PC-3 (cell line): ENCODE measurements at regions of chr3 and their contacts with region 1.

Region 1: DNA sequence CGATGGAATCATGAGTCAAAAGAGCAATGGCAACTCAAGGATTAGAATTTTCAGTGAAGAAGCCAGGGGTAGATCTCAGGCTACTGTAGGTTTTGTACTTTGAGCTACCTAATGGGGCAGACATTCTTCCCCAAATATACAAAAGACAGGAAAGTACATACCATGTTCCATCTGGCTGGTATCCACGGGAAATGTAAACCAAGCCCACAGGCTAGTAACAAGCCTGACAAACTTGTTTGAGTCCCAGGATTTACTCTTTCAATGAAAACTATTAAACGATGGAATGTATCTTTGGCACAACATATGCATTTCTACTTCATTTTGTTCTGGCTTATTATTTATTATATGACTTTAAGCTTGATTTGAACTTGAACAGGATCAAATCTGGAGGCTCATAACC is 44.2 kb upstream of the GOLIM4 start:
- DNase-seq: peak; percentile 64
- ATAC-seq: peak; percentile 55
- H3K4me3 ChIP-seq: no peak overlapping the region
- H3K27ac ChIP-seq: no peak overlapping the region
- H3K4me1 ChIP-seq: no peaks in the 10 kb centered on the region; the same call in 1 of the 2 replicates
- H3K27me3 ChIP-seq: no peaks in the 10 kb centered on the region
- CTCF ChIP-seq: no peak

Region 2: DNA sequence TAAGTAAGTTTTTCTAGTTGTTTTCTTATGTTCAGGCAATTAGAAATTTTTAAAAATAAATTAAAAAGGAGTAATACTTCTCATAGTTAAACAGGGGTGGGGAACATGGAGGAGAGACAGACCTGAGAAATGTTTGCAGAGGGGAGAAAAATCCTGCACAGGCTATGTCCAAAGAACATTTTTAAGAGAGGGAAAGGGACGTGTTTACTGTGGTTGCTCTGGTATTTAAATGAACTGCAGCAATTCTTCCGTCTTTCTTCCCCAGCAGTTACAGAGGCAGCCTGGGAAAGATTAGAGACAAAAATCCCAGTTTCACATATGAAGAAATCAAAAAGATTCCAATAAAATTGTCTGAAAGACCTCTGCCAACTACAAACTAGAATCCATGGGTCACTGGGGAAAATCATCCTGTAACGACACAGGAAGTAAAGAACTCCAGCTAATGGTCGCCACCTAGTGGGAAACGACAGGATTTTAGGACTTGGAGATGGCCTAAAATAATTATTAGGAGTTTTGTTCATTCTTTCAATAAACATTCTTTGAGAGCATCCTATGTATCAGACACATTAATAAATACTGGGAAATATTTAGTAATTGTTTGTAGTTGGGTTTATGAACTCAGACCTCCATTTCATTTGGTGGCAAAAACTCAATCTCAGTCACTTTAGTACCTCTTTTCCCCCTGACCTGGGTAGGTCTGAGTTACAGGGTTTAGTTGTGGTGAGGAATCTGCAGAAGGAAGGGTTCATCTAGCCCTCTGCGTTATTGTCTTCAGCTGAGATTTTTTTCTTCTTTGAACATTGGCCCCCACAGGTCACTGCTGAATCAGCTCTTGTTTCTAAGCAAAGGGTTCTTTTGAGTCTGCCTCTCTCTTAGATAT is 25.7 kb after region 1 on chr3:
- CTCF ChIA-PET with region 1: no interaction called
- POLR2A ChIA-PET with region 1: no interaction called
- intact Hi-C with region 1: loop called (anchors 1 kb)
- DNase-seq: peak; percentile 85
- ATAC-seq: peak; percentile 74
- H3K4me3 ChIP-seq: no peak overlapping the region
- H3K27ac ChIP-seq: no peak overlapping the region
- H3K4me1 ChIP-seq: no peaks in the 10 kb centered on the region; the same call in 1 of the 2 replicates
- H3K27me3 ChIP-seq: no peaks in the 10 kb centered on the region
- CTCF ChIP-seq: peak; percentile 91